Activated naive CD4-positive, alpha-beta T cell treated with anti-CD3 and anti-CD28 coated beads for 36 hours (primary cell): ENCODE measurements at regions of chr12 and their contacts with region 1.

Region 1: GRCh38 chr12:40312982-40313576 is 88.3 kb downstream of the LRRK2 start:
- DNase-seq: no peak
- H3K4me3 Mint-ChIP-seq: no peak overlapping the region
- H3K27ac Mint-ChIP-seq: no peak overlapping the region
- H3K4me1 Mint-ChIP-seq: no peaks in the 10 kb centered on the region
- H3K27me3 Mint-ChIP-seq: no peaks in the 10 kb centered on the region

Region 2: GRCh38 chr12:39764944-39765560 is 548.0 kb before region 1 on chr12:
- CTCF ChIA-PET with region 1: no interaction called
- intact Hi-C with region 1: loop called (anchors 10 kb)
- DNase-seq: no peak
- H3K4me3 Mint-ChIP-seq: no peak overlapping the region
- H3K27ac Mint-ChIP-seq: no peak overlapping the region
- H3K4me1 Mint-ChIP-seq: no peaks in the 10 kb centered on the region
- H3K27me3 Mint-ChIP-seq: no peaks in the 10 kb centered on the region

Region 3: GRCh38 chr12:40010899-40011774 is 301.9 kb before region 1 on chr12:
- CTCF ChIA-PET with region 1: interaction called, 3 read pairs
- intact Hi-C with region 1: loop called (anchors 1 kb)
- DNase-seq: peak; percentile 69
- H3K4me3 Mint-ChIP-seq: peak overlapping the region; percentile 25
- H3K27ac Mint-ChIP-seq: no peak overlapping the region
- H3K4me1 Mint-ChIP-seq: peaks cover 16% of the 10 kb centered on the region
- H3K27me3 Mint-ChIP-seq: no peaks in the 10 kb centered on the region

Region 4: DNA sequence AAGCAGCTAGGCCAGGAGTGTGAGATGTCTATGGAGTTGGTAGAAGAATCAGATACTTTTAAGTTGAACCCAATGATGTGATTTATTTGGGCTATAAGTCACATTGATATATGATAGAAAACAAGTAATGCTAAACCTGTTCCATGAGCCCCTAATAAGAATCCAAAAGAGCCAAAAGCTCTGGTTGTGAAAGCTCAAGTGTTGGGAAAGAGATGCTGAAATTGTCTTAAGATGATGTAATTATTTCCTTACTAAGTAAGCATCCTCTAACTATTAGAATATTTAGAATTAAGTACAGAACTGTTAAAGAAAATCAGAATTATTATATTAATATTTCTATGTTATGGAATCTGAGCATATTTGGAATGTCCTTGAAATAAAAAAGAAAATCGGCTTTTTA is 189.6 kb before region 1 on chr12:
- CTCF ChIA-PET with region 1: no interaction called
- intact Hi-C with region 1: no loop called
- DNase-seq: no peak
- H3K4me3 Mint-ChIP-seq: no peak overlapping the region
- H3K27ac Mint-ChIP-seq: no peak overlapping the region
- H3K4me1 Mint-ChIP-seq: no peaks in the 10 kb centered on the region
- H3K27me3 Mint-ChIP-seq: peaks cover 16% of the 10 kb centered on the region

Region 5: DNA sequence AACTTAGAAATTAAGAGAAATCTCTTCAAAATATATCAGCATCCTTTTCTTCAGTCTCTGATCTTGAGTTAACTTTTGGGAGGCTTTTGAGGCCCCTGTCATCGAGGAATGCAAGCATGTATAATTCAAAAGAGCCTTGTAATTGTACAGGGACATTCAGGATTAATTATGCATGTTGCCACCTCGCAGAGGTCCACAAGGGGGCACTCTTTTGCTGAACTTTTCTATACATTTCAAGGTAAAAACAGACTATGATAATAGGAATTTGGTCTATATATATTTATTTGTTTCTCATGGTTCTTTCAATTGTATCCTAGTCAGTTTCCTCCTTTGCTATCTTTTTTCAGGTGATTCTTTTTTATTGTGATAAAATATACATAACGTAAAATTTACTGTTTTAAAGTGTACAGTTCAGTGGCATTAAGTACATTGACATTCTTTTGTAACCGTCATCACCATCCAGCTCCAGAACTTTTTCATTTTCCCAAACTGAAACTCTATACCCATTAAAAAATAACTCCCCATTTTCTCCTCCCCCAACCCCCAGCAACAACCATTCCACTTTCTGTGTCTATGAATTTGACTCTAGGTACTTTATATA is 160.2 kb before region 1 on chr12:
- CTCF ChIA-PET with region 1: interaction called, 4 read pairs
- intact Hi-C with region 1: loop called (anchors 1 kb)
- DNase-seq: peak; percentile 68
- H3K4me3 Mint-ChIP-seq: no peak overlapping the region
- H3K27ac Mint-ChIP-seq: no peak overlapping the region
- H3K4me1 Mint-ChIP-seq: no peaks in the 10 kb centered on the region
- H3K27me3 Mint-ChIP-seq: peaks cover 16% of the 10 kb centered on the region